Activated CD4-positive, alpha-beta T cell treated with anti-CD3 and anti-CD28 coated beads for 36 hours (primary cell): ENCODE measurements at regions of chr2 and their contacts with region 1.

Region 1: GRCh38 chr2:182715896-182716668 is at the start of gene DNAJC10:
- DNase-seq: peak; percentile 91
- ATAC-seq: peak; percentile 92
- H3K4me3 Mint-ChIP-seq: no peak within 1 kb of the TSS
- H3K27ac Mint-ChIP-seq: no peak within 1 kb of the TSS
- H3K4me1 Mint-ChIP-seq: peaks cover 3% of the 10 kb centered on the region
- H3K27me3 Mint-ChIP-seq: peaks cover under 1% of the 10 kb centered on the region
- total RNA-seq, gene DNAJC10: 41.7 to 48.9 TPM

Region 2: DNA sequence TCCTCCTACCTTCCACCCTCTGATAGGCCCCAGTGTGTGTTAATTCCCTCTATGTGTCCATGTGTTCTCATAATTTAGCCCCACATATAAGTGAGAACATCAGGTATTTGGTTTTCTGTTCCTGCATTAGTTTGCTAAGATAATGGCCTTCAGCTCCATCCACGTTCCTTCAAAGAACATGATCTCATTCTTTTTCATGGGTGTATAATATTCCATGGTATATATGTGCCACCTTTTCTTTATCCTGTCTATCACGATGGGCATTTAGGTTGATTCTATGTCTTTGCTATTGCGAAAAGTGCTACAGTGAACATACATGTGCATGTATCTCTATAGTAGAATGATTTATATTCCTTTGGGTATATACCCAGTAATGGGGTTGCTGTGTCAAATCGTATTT is 242.4 kb before region 1 on chr2:
- CTCF ChIA-PET with region 1: no interaction called
- POLR2A ChIA-PET with region 1: no interaction called
- intact Hi-C with region 1: no loop called
- DNase-seq: no peak
- ATAC-seq: no peak
- H3K4me3 Mint-ChIP-seq: no peak overlapping the region
- H3K27ac Mint-ChIP-seq: no peak overlapping the region
- H3K4me1 Mint-ChIP-seq: no peaks in the 10 kb centered on the region
- H3K27me3 Mint-ChIP-seq: no peaks in the 10 kb centered on the region

Region 3: DNA sequence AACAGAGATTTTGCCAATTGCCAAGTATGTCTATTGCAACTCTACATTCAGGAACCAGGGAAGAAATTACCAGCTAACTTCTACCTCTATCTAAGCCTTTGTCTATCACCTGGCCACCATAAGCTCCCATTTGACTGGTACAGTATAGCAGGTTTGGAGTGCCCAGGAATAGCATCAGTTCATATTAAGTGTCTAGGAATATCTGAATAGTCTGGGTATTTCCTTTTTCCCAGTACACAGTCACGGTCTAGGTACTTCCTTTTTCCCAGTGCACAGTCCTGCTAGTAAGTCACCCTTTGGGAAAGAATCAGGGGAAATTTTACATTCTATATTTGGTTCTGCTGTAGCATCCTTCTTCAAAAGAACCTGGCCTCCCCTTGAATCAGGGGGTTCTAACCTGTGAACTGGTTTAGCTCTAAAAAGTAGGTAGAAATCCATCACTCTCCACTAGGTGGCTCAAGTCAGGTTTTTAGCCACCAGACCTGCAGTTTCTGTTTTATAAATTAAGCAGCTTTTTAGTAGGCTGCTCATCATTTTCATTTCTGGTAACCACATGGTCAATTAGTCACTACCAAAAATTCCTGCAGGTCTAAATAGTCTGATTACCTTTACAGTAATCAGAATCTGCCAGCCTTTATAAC is 49.3 kb before region 1 on chr2:
- CTCF ChIA-PET with region 1: interaction called, 7 read pairs
- POLR2A ChIA-PET with region 1: no interaction called
- intact Hi-C with region 1: loop called (anchors 1 to 2 kb)
- DNase-seq: peak; percentile 20
- ATAC-seq: peak; percentile 86
- H3K4me3 Mint-ChIP-seq: no peak overlapping the region
- H3K27ac Mint-ChIP-seq: no peak overlapping the region
- H3K4me1 Mint-ChIP-seq: peaks cover 4% of the 10 kb centered on the region
- H3K27me3 Mint-ChIP-seq: peaks cover 3% of the 10 kb centered on the region

Region 4: DNA sequence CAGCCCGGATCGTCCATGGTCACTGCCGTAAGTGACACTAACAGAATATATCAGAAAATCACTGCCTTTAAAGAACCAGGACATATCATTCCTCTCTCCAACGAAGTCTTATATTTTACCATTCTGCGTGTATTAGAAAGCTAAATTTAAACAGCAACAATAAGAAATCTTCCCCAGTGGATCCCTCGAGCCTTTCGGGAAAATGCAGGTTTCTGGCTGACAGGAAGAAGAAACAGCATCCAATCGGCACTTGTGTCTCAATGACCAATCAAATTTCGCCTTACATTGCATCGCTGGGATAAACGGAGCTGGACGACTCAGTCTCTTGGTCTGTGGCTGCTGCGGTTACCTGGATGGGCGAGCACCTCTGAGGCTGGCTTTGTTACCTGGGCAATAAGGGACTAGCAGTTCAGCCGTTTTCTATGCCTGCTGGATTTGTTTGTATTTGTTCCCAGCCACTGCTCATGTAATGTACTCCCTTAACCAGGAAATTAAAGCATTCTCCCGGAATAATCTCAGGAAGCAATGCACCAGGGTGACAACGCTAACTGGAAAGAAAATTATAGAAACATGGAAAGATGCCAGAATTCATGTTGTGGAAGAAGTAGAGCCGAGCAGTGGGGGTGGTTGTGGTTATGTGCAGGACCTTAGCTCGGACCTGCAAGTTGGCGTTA is 362.5 kb after region 1 on chr2 and contains the start of gene DUSP19:
- CTCF ChIA-PET with region 1: no interaction called
- POLR2A ChIA-PET with region 1: no interaction called
- intact Hi-C with region 1: loop called in 1 of 2 experiments (anchors 2 kb)
- DNase-seq: peak; percentile 89
- ATAC-seq: peak; percentile 94
- H3K4me3 Mint-ChIP-seq: peak within 1 kb of the TSS; percentile 84
- H3K27ac Mint-ChIP-seq: peak within 1 kb of the TSS; percentile 76
- H3K4me1 Mint-ChIP-seq: peaks cover 7% of the 10 kb centered on the region
- H3K27me3 Mint-ChIP-seq: no peaks in the 10 kb centered on the region
- total RNA-seq, gene DUSP19: 4.0 to 4.2 TPM

Region 5: DNA sequence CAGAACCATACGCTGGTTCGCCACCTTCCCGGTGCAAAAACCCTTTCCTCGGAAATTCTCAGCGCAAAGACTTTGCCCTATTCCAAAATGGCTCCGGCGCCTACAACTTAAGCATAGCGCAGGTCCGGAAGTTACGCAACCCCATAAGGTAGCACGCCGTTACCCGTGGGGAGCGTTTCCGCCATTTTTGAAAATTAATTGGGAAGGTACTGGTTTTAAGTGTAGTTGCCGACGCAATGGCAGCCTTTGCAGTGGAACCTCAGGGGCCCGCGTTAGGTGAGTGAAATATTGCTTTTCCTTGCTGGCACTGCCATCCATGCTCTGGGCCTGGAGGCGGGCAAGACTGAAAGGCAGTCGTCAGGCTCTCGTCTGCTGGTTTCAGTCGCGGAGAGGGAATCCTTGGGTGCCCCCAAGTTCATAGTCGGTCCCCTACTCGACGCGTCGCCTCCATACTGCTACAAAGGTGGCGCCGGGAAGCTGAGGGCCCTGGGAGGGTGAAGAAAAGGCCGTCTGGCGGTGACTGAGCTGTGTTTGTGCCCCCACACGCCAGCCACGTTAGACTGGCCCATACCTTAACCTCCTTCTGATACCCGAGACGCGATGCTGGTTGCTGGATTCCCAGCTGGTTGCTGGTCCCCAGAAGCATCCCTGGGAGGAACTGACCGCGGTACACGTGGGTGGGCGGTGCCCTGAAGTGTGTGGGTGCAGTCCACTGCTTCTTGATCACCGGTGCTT is 408.3 kb after region 1 on chr2 and contains the start of gene NUP35:
- CTCF ChIA-PET with region 1: no interaction called
- POLR2A ChIA-PET with region 1: no interaction called
- intact Hi-C with region 1: loop called (anchors 2 kb)
- DNase-seq: peak; percentile 89
- ATAC-seq: peak; percentile 94
- H3K4me3 Mint-ChIP-seq: peak within 1 kb of the TSS; percentile 96
- H3K27ac Mint-ChIP-seq: peak within 1 kb of the TSS; percentile 97
- H3K4me1 Mint-ChIP-seq: peaks cover 25% of the 10 kb centered on the region
- H3K27me3 Mint-ChIP-seq: peaks cover 7% of the 10 kb centered on the region
- total RNA-seq, gene NUP35: 36.0 to 50.5 TPM